A549 (cell line): ENCODE measurements at regions of chr9 and their contacts with region 1.

Region 1: GRCh38 chr9:90881648-90882047 is 80.0 kb downstream of the SYK start:
- DNase-seq: no peak
- ATAC-seq: no peak
- H3K4me3 ChIP-seq: no peak overlapping the region
- H3K27ac ChIP-seq: no peak overlapping the region
- H3K4me1 ChIP-seq: no peaks in the 10 kb centered on the region
- CTCF ChIP-seq: no peak
- EP300 ChIP-seq: no peak
- POLR2A ChIP-seq: no peak
- RAD21 ChIP-seq: no peak

Region 2: GRCh38 chr9:90142580-90142979 is 739.1 kb before region 1 on chr9:
- CTCF ChIA-PET with region 1: interaction called, 12 read pairs
- POLR2A ChIA-PET with region 1: no interaction called
- DNase-seq: peak in 1 of 2 experiments; percentile 48
- ATAC-seq: no peak
- H3K4me3 ChIP-seq: no peak overlapping the region
- H3K27ac ChIP-seq: no peak overlapping the region
- H3K4me1 ChIP-seq: no peaks in the 10 kb centered on the region
- CTCF ChIP-seq: peak; percentile 55; the same call in 2 of the 3 replicates
- EP300 ChIP-seq: no peak
- POLR2A ChIP-seq: no peak
- RAD21 ChIP-seq: peak; percentile 54 to 55; a peak in 4 of 5 replicates

Region 3: DNA sequence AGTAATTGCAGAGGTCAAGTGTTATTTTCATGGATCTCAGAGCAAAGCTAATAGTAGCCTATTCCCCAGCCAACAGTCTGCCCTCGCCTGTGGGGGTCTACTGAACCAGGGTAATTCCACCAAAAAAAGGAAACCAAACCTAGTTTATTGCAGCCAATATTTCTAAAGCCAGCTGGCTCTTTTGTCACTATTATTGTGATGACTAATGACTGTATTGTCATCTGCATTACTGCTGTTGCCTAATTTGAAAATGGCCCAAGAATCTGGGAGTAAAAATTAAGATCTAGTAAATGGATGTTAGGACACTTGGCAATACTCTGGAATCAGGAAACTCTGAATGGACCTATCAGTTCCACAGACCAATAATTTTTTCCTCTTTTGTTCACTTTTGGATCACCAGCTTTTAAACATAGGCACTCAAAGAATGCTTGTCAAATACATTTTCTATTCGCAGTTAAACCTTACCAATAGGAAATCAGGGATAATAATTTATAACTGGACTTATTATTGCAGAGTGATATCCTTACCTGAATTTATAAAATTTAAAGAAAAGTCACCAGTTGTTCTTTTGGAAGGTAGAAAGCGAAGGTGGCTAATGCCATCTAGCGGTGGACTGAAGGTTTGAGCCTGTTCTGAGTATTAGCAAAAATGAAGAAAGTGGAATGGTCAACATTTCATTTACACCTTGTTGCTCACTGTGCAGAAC is 10.9 kb before region 1 on chr9:
- CTCF ChIA-PET with region 1: interaction called, 31 read pairs
- POLR2A ChIA-PET with region 1: no interaction called
- DNase-seq: peak; percentile 27 to 37
- ATAC-seq: peak; percentile 56 to 72; a peak in 3 of 6 replicates
- H3K4me3 ChIP-seq: no peak overlapping the region
- H3K27ac ChIP-seq: no peak overlapping the region
- H3K4me1 ChIP-seq: no peaks in the 10 kb centered on the region
- CTCF ChIP-seq: peak; percentile 93
- EP300 ChIP-seq: no peak
- POLR2A ChIP-seq: no peak
- RAD21 ChIP-seq: peak; percentile 83 to 85

Region 4: DNA sequence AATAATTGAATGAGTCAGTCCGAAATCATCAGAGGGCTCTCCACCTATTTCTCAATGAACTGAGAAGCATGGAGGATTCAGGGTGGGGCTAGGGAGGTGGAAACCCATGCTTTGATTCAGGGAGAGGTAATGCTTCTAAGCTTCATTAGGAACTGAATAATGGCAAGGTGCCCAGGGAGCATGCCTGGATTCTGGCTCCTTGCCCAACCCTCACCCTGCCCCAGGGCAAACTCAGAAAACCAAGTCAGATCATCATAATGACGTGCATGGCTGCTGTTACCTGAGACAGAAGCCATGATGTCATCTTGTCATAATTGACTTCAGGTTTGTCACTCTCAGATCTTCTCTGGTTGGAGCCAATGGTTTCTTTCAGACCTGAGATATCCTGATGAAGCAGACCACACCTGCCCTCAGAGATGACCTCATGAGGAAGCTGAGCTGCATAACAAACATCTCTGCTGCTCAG is 119.5 kb after region 1 on chr9:
- CTCF ChIA-PET with region 1: no interaction called
- POLR2A ChIA-PET with region 1: no interaction called
- DNase-seq: peak; percentile 20 to 70
- ATAC-seq: peak; percentile 45 to 88; a peak in 5 of 6 replicates
- H3K4me3 ChIP-seq: no peak overlapping the region
- H3K27ac ChIP-seq: 0 out of 6 replicates have a peak overlapping the region, but pooled peaks of 1 of the 2 experiments have one; percentile 47
- H3K4me1 ChIP-seq: peaks cover 18% of the 10 kb centered on the region
- CTCF ChIP-seq: no peak
- EP300 ChIP-seq: 0 out of 5 replicates have a peak, but pooled peaks of 1 of the 2 experiments have one; percentile 23
- POLR2A ChIP-seq: no peak
- RAD21 ChIP-seq: no peak